ENCODE measurements at regions of chr15 and their contacts with region 1.

Region 1: GRCh38 chr15:94327344-94327936 is 96.1 kb downstream of the MCTP2 start:
- DNase-seq: peak; percentile 69

Region 2: DNA sequence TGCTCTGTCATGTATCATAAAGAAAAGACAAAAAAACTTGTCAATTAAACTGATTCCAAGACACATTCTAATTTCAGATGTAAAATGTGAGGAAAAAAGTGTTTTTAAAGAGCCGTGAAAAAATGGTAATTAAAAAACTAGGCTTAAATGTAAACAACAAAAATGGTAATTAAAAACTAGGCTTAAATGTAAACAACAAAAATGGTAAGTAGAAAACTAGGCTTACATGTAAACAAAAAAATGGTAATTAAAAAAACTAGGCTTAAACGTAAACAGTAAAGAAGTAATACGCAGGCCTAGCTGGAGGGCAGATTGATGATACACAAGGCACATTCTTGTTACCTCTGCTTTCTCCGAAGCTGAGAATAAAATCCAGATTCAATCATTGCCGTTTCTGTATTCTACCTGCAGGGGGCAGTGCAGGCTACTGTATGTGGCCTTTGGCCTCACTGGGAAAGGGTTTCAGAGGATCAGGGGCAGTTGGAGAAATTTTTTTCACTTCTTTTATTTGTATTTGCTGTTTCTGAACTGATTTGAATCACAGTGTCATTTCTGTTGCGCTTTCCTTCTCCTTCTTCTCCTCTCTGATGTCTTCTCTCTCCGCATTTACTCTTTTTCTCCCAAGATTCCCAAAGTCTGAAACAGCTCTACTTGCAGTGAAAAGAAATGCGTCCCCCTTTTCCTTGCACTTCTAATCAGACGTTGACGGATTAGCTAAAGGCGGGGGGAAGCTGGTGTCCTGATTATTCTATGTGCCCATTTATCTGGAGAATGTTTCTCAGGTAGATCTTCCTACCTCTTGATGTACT is 163.2 kb before region 1 on chr15:
- in situ Hi-C with region 1: loop called (anchors 25 kb)
- DNase-seq: peak; percentile 91

Region 3: DNA sequence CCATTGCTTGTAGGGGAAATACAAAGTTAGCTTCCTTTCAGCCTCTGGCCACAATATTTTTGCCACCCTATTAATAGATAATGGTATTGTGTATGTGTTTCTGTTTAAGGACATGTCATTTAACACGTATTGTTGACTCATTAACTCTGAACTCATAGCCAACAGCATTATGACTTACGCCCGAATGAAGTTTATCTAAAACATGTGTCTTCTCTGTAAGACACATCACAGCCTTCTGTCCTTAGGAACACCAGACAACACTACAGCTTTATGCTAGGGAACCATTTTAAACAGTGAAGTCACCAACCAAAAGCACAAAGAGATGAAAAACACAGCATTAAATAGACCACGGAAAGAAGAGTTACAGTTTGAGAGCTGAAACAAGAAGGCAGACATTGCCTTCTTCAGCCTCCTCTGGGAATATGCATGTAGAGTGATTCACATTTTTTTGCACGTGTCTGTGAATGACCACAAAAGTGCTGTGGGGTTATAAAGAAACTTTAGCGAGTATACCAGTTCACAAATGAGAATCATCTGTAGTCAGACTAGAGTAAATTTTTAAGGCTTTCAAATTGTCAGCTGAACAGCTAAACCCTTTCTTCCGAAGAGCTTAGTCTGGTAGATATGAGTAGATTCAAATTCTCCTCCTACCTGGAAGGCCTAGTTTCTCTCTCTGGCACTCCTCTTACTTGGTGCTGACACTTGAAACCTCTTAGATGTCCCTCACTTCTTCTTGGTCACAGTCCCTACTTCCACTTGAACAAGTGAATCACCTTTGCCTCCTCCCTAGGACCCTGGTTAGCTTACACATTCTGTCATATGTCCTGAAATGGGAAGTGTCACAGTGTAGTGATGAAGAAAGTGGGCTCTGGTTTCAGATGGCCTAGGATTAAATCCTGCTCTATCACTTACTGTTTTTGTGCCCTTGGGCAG is 63.8 kb before region 1 on chr15:
- in situ Hi-C with region 1: no loop called
- DNase-seq: no peak